Activated CD8-positive, alpha-beta T cell treated with anti-CD3 and anti-CD28 coated beads for 36 hours (primary cell): ENCODE measurements at regions of chr3 and their contacts with region 1.

Region 1: DNA sequence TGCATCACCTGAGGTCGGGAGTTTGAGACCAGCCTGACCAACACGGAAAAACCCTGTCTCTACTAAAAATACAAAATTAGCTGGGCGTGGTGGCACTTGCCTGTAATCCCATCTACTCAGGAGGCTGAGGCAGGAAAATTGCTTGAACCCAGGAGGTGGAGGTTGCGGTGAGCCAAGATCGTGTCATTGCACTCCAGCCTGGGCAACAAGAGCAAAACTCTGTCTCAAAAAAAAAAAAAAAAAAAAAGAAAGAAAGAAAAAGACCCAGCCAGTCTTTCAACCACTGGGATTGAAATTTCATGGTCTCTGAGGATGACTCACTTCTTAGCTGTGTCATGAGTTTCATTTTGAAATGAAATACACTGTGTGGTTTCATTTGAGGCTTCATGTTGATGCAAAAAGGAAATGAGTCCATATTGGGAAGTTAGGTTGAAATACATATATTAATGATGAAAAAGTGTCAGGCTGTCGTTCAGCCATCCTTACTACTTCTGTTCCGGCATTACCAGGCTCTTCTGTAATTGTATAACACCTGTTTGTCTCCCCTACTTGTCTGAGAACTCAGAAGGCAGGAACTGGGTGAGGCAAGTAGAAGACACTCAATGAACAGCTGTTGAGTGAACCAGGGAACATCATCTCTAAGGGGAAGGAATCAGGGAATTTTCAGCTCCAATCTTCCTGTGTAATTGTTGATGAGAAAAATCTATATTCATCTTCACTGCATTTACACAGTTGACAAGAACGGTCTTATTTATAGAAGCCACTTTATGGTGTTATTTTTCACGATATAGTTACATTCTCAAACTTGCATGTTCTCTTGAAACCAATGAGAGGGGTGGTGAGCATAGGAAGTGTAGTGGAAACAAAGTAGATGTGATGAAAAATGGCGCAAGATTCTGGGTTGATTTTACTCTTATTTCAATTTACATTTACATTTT is 87.4 kb downstream of the NFKBIZ start:
- DNase-seq: peak; percentile 33
- ATAC-seq: peak; percentile 88
- H3K4me3 Mint-ChIP-seq: peak overlapping the region; percentile 2
- H3K27ac Mint-ChIP-seq: peak overlapping the region; percentile 79
- H3K4me1 Mint-ChIP-seq: peaks cover 34% of the 10 kb centered on the region
- H3K27me3 Mint-ChIP-seq: peaks cover 2% of the 10 kb centered on the region
- CTCF ChIP-seq: no peak

Region 2: GRCh38 chr3:101827211-101828174 is 109.2 kb before region 1 on chr3:
- CTCF ChIA-PET with region 1: interaction called, 3 read pairs
- POLR2A ChIA-PET with region 1: no interaction called
- intact Hi-C with region 1: loop called (anchors 10 kb)
- DNase-seq: peak; percentile 98
- ATAC-seq: peak; percentile 86
- H3K4me3 Mint-ChIP-seq: peak overlapping the region; percentile 84
- H3K27ac Mint-ChIP-seq: peak overlapping the region; percentile 95
- H3K4me1 Mint-ChIP-seq: peaks cover 63% of the 10 kb centered on the region
- H3K27me3 Mint-ChIP-seq: no peaks in the 10 kb centered on the region
- CTCF ChIP-seq: no peak

Region 3: GRCh38 chr3:101925573-101925972 is 11.1 kb before region 1 on chr3:
- CTCF ChIA-PET with region 1: interaction called, 10 read pairs
- POLR2A ChIA-PET with region 1: interaction called, 5 read pairs
- intact Hi-C with region 1: no loop called
- DNase-seq: no peak
- ATAC-seq: no peak
- H3K4me3 Mint-ChIP-seq: no peak overlapping the region
- H3K27ac Mint-ChIP-seq: peak overlapping the region; percentile 14
- H3K4me1 Mint-ChIP-seq: peaks cover 31% of the 10 kb centered on the region
- H3K27me3 Mint-ChIP-seq: no peaks in the 10 kb centered on the region
- CTCF ChIP-seq: no peak

Region 4: DNA sequence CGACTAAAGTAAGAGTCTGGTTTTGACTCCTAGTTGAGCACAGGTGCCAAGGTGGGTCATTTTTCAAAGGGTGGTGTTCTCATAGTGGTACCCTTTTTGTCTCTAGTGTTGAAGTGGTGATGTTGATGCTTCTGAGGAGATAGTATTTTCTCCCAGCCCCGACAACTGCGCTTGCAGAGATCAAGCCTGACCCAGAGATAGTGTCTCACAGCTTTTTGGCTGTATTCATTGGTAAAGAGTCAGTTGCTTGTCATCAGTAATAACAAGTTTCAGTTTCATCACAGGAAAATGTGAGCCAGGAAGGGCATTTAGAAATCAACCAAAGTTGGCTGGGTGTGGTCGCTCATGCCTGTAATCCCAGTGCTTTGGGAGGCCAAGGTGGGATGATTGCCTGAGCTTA is 51.9 kb after region 1 on chr3:
- CTCF ChIA-PET with region 1: interaction called, 3 read pairs
- POLR2A ChIA-PET with region 1: no interaction called
- intact Hi-C with region 1: loop called (anchors 5 kb)
- DNase-seq: peak; percentile 41
- ATAC-seq: peak; percentile 73
- H3K4me3 Mint-ChIP-seq: no peak overlapping the region
- H3K27ac Mint-ChIP-seq: no peak overlapping the region
- H3K4me1 Mint-ChIP-seq: peaks cover 21% of the 10 kb centered on the region
- H3K27me3 Mint-ChIP-seq: no peaks in the 10 kb centered on the region
- CTCF ChIP-seq: no peak